Activated CD8-positive, alpha-beta T cell treated with anti-CD3 and anti-CD28 coated beads for 36 hours (primary cell): ENCODE measurements at regions of chr1 and their contacts with region 1.

Region 1: DNA sequence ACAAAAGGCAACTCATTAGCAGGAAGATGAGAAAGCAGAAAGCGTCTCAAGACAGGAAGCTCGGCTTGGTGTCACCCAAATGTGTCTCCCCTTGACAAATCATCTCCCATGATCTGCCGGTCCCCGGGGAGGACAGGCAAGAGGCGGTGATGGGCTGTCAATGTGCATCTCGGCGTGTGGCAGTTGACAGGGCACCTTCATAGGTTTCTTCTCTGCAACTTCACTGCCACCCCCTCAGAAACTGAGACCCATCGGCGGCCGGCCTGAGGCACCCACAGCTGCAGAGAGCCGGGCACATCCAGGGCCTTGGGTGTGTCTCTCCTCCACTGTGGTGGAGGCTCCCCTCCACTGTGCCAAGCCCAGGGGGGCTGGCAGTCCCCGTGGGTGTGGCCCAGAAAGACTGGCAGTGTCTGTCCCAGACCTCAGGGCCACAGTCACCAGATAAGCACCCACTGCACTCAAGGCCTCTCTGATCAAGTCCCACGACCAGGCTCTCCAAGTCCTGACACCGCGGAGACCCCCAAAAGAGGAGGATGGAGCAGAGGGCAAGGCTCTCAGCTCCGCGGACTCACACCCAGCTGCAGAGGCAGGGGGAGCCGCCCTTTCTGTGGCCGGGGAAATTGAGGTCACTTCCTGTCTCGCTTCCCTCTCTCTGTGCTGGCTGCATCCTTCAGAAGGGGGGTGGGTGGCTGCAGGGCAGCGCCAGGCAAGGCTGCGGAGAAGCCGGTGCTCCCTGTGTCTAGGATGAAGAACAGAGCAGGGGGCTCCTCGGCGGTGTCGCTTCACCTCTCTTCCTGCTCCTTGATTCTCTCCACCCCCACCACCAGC is 39.6 kb upstream of the LBR start:
- DNase-seq: peak; percentile 91
- ATAC-seq: peak; percentile 90
- H3K4me3 Mint-ChIP-seq: peak overlapping the region; percentile 91
- H3K27ac Mint-ChIP-seq: peak overlapping the region; percentile 99
- H3K4me1 Mint-ChIP-seq: peaks cover 20% of the 10 kb centered on the region
- H3K27me3 Mint-ChIP-seq: no peaks in the 10 kb centered on the region
- CTCF ChIP-seq: no peak

Region 2: GRCh38 chr1:225428068-225428880 is 39.1 kb before region 1 on chr1:
- CTCF ChIA-PET with region 1: interaction called, 5 read pairs
- POLR2A ChIA-PET with region 1: interaction called, 18 read pairs
- intact Hi-C with region 1: no loop called
- DNase-seq: peak; percentile 91
- ATAC-seq: peak; percentile 94
- H3K4me3 Mint-ChIP-seq: peak overlapping the region; percentile 99
- H3K27ac Mint-ChIP-seq: peak overlapping the region; percentile 90
- H3K4me1 Mint-ChIP-seq: peaks cover 47% of the 10 kb centered on the region
- H3K27me3 Mint-ChIP-seq: no peaks in the 10 kb centered on the region
- CTCF ChIP-seq: no peak

Region 3: DNA sequence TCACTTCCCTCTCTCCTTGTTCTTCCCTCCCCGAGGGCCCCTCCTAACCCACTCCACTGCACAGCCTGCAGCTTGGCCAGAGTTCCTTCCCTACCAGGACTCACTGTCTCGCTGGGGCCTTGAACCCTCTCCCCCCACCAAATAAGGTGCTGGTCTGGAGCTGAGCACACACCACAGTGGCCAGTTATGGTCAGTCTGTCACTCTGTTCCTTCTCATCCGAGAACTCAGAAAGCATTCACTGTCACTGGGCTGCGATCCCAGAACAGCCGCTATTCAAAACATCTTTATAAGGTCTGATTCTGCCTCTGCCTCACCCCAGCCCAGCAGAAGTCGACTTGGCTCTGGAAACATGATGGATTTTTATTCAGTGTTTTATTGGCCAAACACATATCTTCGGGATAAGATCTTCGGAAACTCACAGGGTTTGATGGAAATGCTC is 19.7 kb before region 1 on chr1:
- CTCF ChIA-PET with region 1: interaction called, 11 read pairs
- POLR2A ChIA-PET with region 1: interaction called, 13 read pairs
- intact Hi-C with region 1: no loop called
- DNase-seq: no peak
- ATAC-seq: no peak
- H3K4me3 Mint-ChIP-seq: no peak overlapping the region
- H3K27ac Mint-ChIP-seq: no peak overlapping the region
- H3K4me1 Mint-ChIP-seq: peaks cover 44% of the 10 kb centered on the region
- H3K27me3 Mint-ChIP-seq: no peaks in the 10 kb centered on the region
- CTCF ChIP-seq: no peak

Region 4: GRCh38 chr1:225454733-225455132 is 12.7 kb before region 1 on chr1:
- CTCF ChIA-PET with region 1: interaction called, 6 read pairs
- POLR2A ChIA-PET with region 1: interaction called, 15 read pairs
- intact Hi-C with region 1: no loop called
- DNase-seq: peak; percentile 96
- ATAC-seq: peak; percentile 97
- H3K4me3 Mint-ChIP-seq: peak overlapping the region; percentile 34
- H3K27ac Mint-ChIP-seq: peak overlapping the region; percentile 71
- H3K4me1 Mint-ChIP-seq: peaks cover 42% of the 10 kb centered on the region
- H3K27me3 Mint-ChIP-seq: no peaks in the 10 kb centered on the region
- CTCF ChIP-seq: no peak

Region 5: GRCh38 chr1:225494789-225495359 is 27.5 kb after region 1 on chr1:
- CTCF ChIA-PET with region 1: no interaction called
- POLR2A ChIA-PET with region 1: no interaction called
- intact Hi-C with region 1: no loop called
- DNase-seq: no peak
- ATAC-seq: no peak
- H3K4me3 Mint-ChIP-seq: no peak overlapping the region
- H3K27ac Mint-ChIP-seq: no peak overlapping the region
- H3K4me1 Mint-ChIP-seq: peaks cover 10% of the 10 kb centered on the region
- H3K27me3 Mint-ChIP-seq: peaks cover 3% of the 10 kb centered on the region
- CTCF ChIP-seq: no peak

Region 6: DNA sequence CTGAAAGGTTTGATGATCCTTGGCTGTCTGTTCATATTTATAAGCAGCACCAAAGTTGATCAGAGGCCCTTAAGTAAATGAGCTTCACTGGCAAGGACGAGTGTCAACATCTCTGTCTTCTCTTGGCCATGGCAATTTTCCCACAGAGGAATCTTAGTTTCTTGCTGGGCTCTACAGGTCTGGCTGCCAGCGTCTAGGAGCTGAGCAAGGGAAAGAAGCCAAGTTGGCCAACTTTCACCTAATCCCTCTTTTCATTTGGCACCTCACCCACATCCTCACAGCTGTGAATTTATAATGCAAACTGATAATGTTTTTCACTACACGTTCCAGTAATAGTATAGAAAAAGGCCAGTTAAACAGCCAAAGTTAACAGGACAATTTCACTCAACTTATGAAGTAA is 59.5 kb after region 1 on chr1:
- CTCF ChIA-PET with region 1: no interaction called
- POLR2A ChIA-PET with region 1: no interaction called
- intact Hi-C with region 1: no loop called
- DNase-seq: no peak
- ATAC-seq: no peak
- H3K4me3 Mint-ChIP-seq: no peak overlapping the region
- H3K27ac Mint-ChIP-seq: no peak overlapping the region
- H3K4me1 Mint-ChIP-seq: no peaks in the 10 kb centered on the region
- H3K27me3 Mint-ChIP-seq: peaks cover 6% of the 10 kb centered on the region
- CTCF ChIP-seq: no peak